Right ventricle myocardium superior (tissue), 1 donor: ENCODE measurements at regions of chr5 and their contacts with region 1.

Region 1: GRCh38 chr5:82165740-82166530 is 112.2 kb downstream of the RPS23 start:
- DNase-seq: peak; percentile 63
- ATAC-seq: peak; percentile 100

Region 2: GRCh38 chr5:81425569-81425968 is 740.4 kb before region 1 on chr5:
- intact Hi-C with region 1: loop called (anchors 10 kb)
- DNase-seq: no peak
- ATAC-seq: peak; percentile 76